Dorsolateral prefrontal cortex (tissue), 120 donors: ENCODE measurements at regions of chr17 and their contacts with region 1.

Region 1: GRCh38 chr17:36608794-36609497 is 7.6 kb downstream of the MRM1 start:
- DNase-seq: peak in 9 of 10 donors; percentile 58 to 79 (median 72)
- H3K4me3 ChIP-seq: peak overlapping the region in 33 of 59 donors; percentile 4 to 52 (median 27)
- H3K27ac ChIP-seq: peak overlapping the region in 1 of 59 donors; percentile 41
- H3K27me3 ChIP-seq: no peaks in the 10 kb centered on the region
- CTCF ChIP-seq: peak; percentile 22 to 73 (median 54)

Region 2: GRCh38 chr17:36674278-36674650 is 65.3 kb after region 1 on chr17:
- intact Hi-C with region 1: no loop called
- DNase-seq: no peak
- H3K4me3 ChIP-seq: no peak overlapping the region
- H3K27ac ChIP-seq: no peak overlapping the region
- H3K27me3 ChIP-seq: no peaks in the 10 kb centered on the region
- CTCF ChIP-seq: no peak

Region 3: GRCh38 chr17:37047631-37048104 is 438.7 kb after region 1 on chr17:
- intact Hi-C with region 1: loop called in 1 of 2 experiments (anchors 5 kb)
- DNase-seq: peak; percentile 81 to 96 (median 88)
- H3K4me3 ChIP-seq: no peak overlapping the region
- H3K27ac ChIP-seq: peak overlapping the region in 2 of 59 donors; percentile 9 to 69
- H3K27me3 ChIP-seq: no peaks in the 10 kb centered on the region
- CTCF ChIP-seq: peak; percentile 83 to 98 (median 91)

Region 4: DNA sequence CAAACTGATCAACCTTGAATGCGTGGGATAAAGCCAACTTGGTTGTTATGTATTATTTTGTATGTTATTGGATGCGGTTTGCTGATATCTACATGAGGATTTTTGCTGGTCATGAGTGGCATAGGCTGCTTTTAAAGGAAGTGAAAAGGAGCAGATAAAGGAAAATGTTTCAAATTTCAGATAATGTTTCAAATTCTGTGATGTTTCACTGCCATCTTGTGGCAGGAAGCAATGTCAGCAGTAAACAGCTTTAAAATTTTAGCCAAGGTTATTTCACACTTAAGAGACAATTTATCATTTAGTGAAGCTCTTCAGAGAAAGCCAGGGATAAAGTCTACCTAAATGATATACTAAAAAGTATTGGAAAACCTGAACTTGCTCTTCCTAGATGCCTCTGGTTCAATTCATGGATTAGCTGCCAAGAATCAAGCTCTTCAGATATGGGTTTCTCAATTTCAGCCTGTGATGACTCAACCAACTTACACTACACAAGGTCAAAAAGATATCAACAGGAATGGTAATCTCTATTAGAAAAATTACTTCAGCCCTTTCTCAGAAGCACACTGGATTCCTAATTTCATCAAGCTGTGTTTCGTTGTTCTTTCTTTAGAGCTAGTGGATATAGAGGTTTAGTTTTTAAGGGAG is 630.9 kb after region 1 on chr17:
- intact Hi-C with region 1: loop called in 1 of 2 experiments (anchors 5 kb)
- DNase-seq: no peak
- H3K4me3 ChIP-seq: no peak overlapping the region
- H3K27ac ChIP-seq: peak overlapping the region in 7 of 59 donors; percentile 2 to 35 (median 19)
- H3K27me3 ChIP-seq: no peaks in the 10 kb centered on the region
- CTCF ChIP-seq: peak; percentile 46 to 84 (median 72)